B cell (primary cell): ENCODE measurements at regions of chr1 and their contacts with region 1.

Region 1: DNA sequence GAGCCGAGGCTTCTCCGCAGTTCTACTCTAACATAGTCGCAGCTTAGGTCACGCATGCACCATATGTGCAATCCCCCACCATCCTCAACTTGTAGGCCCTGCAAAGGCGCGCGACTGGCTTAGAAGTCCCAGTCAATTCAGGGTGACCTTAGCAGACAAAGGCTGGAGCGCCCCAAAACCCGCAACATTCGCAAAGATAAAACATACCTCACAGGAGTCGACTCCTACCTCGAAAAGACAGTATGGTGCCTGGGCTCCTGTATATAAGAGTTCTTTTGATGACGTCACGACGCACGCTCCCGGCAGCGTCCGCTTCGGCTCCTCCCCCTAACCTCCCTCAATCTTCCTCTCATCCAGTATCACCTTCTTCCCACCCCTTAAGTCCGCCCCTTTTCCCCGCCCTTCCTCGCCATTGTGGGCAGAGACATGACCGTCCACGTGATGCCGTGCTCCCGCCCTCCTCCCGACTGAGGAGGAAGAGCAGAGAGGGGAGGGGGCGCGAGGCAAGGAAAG is at the start of gene GAS5:
- DNase-seq: peak; percentile 99
- ATAC-seq: peak; percentile 77
- H3K4me3 ChIP-seq: peak within 1 kb of the TSS; percentile 70 to 98 (median 89)
- H3K4me3 Mint-ChIP-seq: peak within 1 kb of the TSS; percentile 94
- H3K27ac ChIP-seq: peak within 1 kb of the TSS; percentile 90 to 93
- H3K27ac Mint-ChIP-seq: peak within 1 kb of the TSS; percentile 98
- H3K4me1 ChIP-seq: peaks cover 42 to 50% of the 10 kb centered on the region in 2 donors
- H3K4me1 Mint-ChIP-seq: peaks cover 70% of the 10 kb centered on the region
- H3K27me3 ChIP-seq: no peaks in the 10 kb centered on the region
- H3K27me3 Mint-ChIP-seq: no peaks in the 10 kb centered on the region
- CTCF ChIP-seq: no peak
- total RNA-seq, gene GAS5: 590 and 622 TPM in 2 replicates

Region 2: DNA sequence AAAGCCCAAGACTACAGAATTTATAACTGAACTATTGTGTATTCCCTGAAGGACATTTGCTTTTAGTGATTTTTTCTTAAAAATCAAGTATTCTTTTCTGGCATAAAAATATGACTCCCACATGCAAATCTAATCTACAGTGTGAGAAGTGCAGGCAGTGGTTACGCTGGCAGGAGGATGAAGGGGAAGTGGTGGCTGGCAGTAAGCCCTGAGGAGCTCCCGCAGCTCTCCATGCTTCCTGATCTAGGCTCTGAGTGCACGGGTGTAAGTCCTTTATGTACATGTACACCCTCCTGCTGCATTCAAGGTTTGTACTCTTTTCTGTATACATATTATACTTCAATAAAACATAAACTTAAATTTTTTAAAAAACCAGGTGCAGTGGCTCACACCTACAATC is 458.2 kb before region 1 on chr1:
- CTCF ChIA-PET with region 1: no interaction called
- POLR2A ChIA-PET with region 1: interaction called, 3 read pairs
- intact Hi-C with region 1: loop called (anchors 2 kb)
- DNase-seq: peak; percentile 73
- ATAC-seq: peak; percentile 22
- H3K4me3 ChIP-seq: no peak overlapping the region
- H3K4me3 Mint-ChIP-seq: peak overlapping the region; percentile 64
- H3K27ac ChIP-seq: peak overlapping the region; percentile 89 to 97
- H3K27ac Mint-ChIP-seq: peak overlapping the region; percentile 87
- H3K4me1 ChIP-seq: peaks cover 76 to 88% of the 10 kb centered on the region in 2 donors
- H3K4me1 Mint-ChIP-seq: peaks cover 79% of the 10 kb centered on the region
- H3K27me3 ChIP-seq: no peaks in the 10 kb centered on the region
- H3K27me3 Mint-ChIP-seq: no peaks in the 10 kb centered on the region
- CTCF ChIP-seq: no peak

Region 3: GRCh38 chr1:173476664-173477285 is 391.0 kb before region 1 on chr1:
- CTCF ChIA-PET with region 1: no interaction called
- POLR2A ChIA-PET with region 1: interaction called, 11 read pairs
- intact Hi-C with region 1: loop called (anchors 1 kb)
- DNase-seq: peak; percentile 92
- ATAC-seq: peak; percentile 92
- H3K4me3 ChIP-seq: peak overlapping the region; percentile 48 to 96 (median 87)
- H3K4me3 Mint-ChIP-seq: peak overlapping the region; percentile 99
- H3K27ac ChIP-seq: peak overlapping the region; percentile 42 to 82
- H3K27ac Mint-ChIP-seq: peak overlapping the region; percentile 99
- H3K4me1 ChIP-seq: peaks cover 22 to 23% of the 10 kb centered on the region in 2 donors
- H3K4me1 Mint-ChIP-seq: peaks cover 42% of the 10 kb centered on the region
- H3K27me3 ChIP-seq: no peaks in the 10 kb centered on the region
- H3K27me3 Mint-ChIP-seq: no peaks in the 10 kb centered on the region
- CTCF ChIP-seq: no peak

Region 4: GRCh38 chr1:173714759-173715537 is 152.9 kb before region 1 on chr1 and contains the start of gene KLHL20:
- CTCF ChIA-PET with region 1: interaction called, 6 read pairs
- POLR2A ChIA-PET with region 1: interaction called, 10 read pairs
- intact Hi-C with region 1: loop called (anchors 2 kb)
- DNase-seq: peak; percentile 90
- ATAC-seq: peak; percentile 93
- H3K4me3 ChIP-seq: peak within 1 kb of the TSS; percentile 76 to 92 (median 84)
- H3K4me3 Mint-ChIP-seq: peak within 1 kb of the TSS; percentile 98
- H3K27ac ChIP-seq: peak within 1 kb of the TSS; percentile 75 to 84
- H3K27ac Mint-ChIP-seq: peak within 1 kb of the TSS; percentile 96
- H3K4me1 ChIP-seq: peaks cover 10 to 15% of the 10 kb centered on the region in 2 donors
- H3K4me1 Mint-ChIP-seq: peaks cover 23% of the 10 kb centered on the region
- H3K27me3 ChIP-seq: peaks cover 0 to 9% (median 2%) of the 10 kb centered on the region in 4 experiments
- H3K27me3 Mint-ChIP-seq: peaks cover 26% of the 10 kb centered on the region
- CTCF ChIP-seq: no peak
- total RNA-seq, gene KLHL20: 32.2 and 35.4 TPM in 2 replicates

Region 5: DNA sequence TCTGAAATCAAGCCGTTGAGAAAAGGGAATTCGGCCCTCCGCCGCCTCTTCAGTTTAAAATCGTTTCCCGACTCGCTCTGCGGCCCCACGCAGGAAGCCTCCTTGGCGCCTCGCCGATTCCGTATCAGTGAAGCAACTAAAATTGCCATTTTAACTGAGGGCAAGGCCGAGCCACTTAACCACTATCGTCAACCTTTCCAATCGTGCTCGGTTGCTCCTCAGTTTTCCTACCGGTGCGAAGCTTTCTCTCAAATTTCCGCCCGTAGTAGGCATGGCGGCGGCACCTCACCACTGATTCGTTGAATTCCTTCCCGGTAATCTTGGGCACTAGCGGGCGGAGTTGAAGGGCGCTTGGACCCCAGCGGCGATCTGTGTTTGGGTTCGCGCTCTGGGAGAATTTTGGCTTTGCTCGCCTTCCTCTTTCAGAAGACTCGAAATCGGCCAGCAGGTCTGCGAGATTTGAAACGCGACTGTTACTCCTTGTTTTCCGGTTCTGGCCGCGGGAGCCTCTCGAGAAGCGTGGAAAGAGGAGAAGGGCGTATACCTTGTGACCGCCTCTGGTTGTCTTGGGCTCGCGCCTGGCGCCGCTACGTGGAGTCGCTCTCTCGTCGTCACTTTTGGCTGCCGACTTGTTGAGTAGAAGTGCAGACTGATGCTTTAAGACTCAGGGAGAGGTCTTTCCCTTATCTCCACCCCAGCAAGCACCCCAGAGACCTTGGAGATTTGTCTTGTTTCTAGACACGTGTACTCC is 43.3 kb before region 1 on chr1 and contains the starts of genes CENPL and DARS2:
- CTCF ChIA-PET with region 1: interaction called, 8 read pairs
- POLR2A ChIA-PET with region 1: interaction called, 15 read pairs
- intact Hi-C with region 1: loop called (anchors 1 kb)
- DNase-seq: peak; percentile 94
- ATAC-seq: peak; percentile 89
- H3K4me3 ChIP-seq: peak within 1 kb of the TSS; percentile 78 to 100 (median 93)
- H3K4me3 Mint-ChIP-seq: peak within 1 kb of the TSS; percentile 92
- H3K27ac ChIP-seq: peak within 1 kb of the TSS; percentile 77 to 87
- H3K27ac Mint-ChIP-seq: peak within 1 kb of the TSS; percentile 95
- H3K4me1 ChIP-seq: peaks cover 8 to 18% of the 10 kb centered on the region in 2 donors
- H3K4me1 Mint-ChIP-seq: peaks cover 21% of the 10 kb centered on the region
- H3K27me3 ChIP-seq: no peaks in the 10 kb centered on the region
- H3K27me3 Mint-ChIP-seq: no peaks in the 10 kb centered on the region
- CTCF ChIP-seq: no peak
- total RNA-seq, gene CENPL: 9.7 and 14.4 TPM in 2 replicates
- total RNA-seq, gene DARS2: 17.0 and 17.3 TPM in 2 replicates

Region 6: GRCh38 chr1:174022080-174022975 is 154.5 kb after region 1 on chr1 and contains the start of gene RC3H1:
- CTCF ChIA-PET with region 1: no interaction called
- POLR2A ChIA-PET with region 1: interaction called, 16 read pairs
- intact Hi-C with region 1: loop called (anchors 1 kb)
- DNase-seq: peak; percentile 93
- ATAC-seq: peak; percentile 95
- H3K4me3 ChIP-seq: peak within 1 kb of the TSS; percentile 73 to 94 (median 91)
- H3K4me3 Mint-ChIP-seq: peak within 1 kb of the TSS; percentile 95
- H3K27ac ChIP-seq: peak within 1 kb of the TSS; percentile 76 to 93
- H3K27ac Mint-ChIP-seq: peak within 1 kb of the TSS; percentile 96
- H3K4me1 ChIP-seq: peaks cover 30 to 36% of the 10 kb centered on the region in 2 donors
- H3K4me1 Mint-ChIP-seq: peaks cover 41% of the 10 kb centered on the region
- H3K27me3 ChIP-seq: no peaks in the 10 kb centered on the region
- H3K27me3 Mint-ChIP-seq: no peaks in the 10 kb centered on the region
- CTCF ChIP-seq: no peak
- total RNA-seq, gene RC3H1: 84.4 and 84.5 TPM in 2 replicates